Activated naive CD4-positive, alpha-beta T cell treated with anti-CD3 and anti-CD28 coated beads for 36 hours (primary cell): ENCODE measurements at regions of chr6 and their contacts with region 1.

Region 1: DNA sequence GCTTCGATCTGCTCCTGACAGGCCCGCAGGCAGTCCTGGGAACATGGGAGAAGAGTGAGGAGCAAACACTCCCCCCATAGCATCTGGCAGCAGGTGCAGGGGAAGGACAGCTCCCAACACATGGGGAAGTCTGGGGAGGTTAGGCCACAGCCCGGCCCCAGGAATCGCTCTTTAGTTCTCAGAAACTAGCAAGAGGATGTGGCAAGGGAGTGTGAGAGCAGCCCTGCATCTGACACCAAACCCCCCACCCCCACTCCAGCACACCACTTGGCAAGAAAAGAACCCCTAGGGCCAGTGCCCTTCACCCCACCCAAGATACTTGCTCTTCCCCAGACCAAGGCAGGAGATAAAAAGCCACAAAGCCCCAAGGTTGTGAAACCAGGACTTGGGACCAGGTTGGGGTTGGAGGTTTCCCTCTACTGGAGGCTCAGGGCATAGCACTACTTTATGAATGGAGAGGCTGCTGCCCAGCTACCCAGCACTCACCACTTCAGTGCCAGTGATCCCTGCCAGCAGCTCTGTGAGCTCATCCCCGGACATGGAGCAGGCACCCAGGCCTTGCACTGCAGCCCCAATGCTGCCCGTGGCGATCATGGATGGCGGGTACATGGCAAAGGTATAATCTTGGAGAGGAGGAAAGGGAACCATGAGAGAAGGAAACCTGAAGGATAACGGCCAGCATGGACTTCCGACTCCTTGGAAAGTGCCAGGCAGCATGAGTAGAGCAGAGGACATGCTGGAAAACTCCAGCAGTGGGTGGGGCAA is 5.4 kb downstream of the CCND3 start:
- DNase-seq: peak; percentile 80
- H3K4me3 Mint-ChIP-seq: peak overlapping the region; percentile 100
- H3K27ac Mint-ChIP-seq: peak overlapping the region; percentile 99
- H3K4me1 Mint-ChIP-seq: peaks cover 38% of the 10 kb centered on the region
- H3K27me3 Mint-ChIP-seq: no peaks in the 10 kb centered on the region

Region 2: GRCh38 chr6:41813469-41813868 is 122.8 kb before region 1 on chr6:
- CTCF ChIA-PET with region 1: no interaction called
- intact Hi-C with region 1: no loop called
- DNase-seq: no peak
- H3K4me3 Mint-ChIP-seq: no peak overlapping the region
- H3K27ac Mint-ChIP-seq: no peak overlapping the region
- H3K4me1 Mint-ChIP-seq: no peaks in the 10 kb centered on the region
- H3K27me3 Mint-ChIP-seq: no peaks in the 10 kb centered on the region

Region 3: DNA sequence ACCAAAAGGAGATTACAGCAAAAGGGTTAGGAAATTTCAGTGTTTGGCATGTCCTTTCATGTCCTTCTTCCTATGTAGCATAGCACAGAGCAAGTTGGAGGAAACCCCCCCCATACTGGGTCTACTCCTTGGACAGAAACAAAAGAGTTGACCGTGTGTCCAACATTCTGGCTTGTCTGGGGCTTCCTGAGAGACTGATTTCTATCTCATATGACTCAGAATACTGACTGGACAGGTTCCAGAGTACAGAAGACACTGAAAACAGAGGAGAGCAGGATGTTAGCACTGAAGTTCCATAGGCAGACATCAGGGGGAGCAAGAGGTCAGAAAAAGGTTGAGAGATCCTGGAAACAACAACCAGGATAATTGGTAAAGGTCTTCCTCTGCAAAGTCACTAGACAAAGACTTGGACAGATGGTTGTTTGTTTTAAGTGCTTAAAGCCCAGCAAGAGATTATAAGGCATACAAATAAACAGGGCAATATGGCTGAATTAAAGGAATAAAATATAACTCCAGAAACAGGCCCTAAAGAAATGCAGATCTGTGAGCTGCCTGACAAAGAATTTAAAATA is 89.5 kb before region 1 on chr6:
- CTCF ChIA-PET with region 1: interaction called, 8 read pairs
- intact Hi-C with region 1: loop called (anchors 2 kb)
- DNase-seq: peak; percentile 81
- H3K4me3 Mint-ChIP-seq: no peak overlapping the region
- H3K27ac Mint-ChIP-seq: no peak overlapping the region
- H3K4me1 Mint-ChIP-seq: peaks cover 5% of the 10 kb centered on the region
- H3K27me3 Mint-ChIP-seq: no peaks in the 10 kb centered on the region

Region 4: DNA sequence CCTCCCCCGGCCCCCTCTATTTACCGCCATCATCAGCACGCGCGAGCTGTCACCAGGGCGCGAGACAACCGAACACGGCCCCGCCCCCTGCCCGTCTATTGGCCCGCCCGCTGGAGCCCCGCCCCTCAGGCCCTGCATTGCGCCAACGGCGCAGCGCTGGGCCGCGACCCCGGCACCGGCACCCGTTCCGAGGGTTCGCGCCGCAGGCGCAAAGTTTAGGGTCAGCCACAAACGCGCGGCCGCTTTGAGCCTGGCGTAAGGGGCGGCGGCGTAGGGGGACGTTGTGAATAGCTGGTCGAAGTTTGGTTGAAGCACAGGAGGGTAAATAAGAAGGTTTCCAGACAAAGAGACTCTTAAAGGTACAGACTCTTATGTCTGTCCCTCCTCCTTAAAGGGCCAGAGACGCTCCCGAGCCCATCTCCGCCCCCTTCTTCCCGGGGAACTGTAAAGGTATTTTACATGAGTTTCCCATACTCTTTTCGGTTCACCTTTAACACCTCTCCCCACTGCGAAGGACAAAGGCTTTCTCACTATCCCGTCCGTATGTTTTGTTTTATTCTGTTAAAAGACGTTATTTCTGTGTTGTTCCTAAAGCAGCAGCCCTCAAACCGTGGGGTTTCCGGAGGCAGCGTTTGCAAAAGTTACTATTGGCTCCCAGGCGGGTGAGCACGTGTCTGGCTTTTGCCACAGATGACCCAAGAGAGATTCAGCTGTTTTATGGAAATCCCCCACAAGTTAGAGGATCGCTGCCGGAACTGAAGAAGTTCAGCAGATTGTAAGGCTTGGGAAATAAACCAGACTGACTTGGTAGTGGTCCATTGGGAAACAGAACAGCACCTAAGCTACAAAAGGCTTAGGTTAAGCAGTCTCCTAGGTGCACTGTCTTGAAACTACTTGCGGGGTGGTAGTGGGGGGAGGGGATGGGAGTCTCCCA is 40.7 kb before region 1 on chr6 and contains the start of gene USP49:
- CTCF ChIA-PET with region 1: no interaction called
- intact Hi-C with region 1: loop called (anchors 2 kb)
- DNase-seq: peak; percentile 93
- H3K4me3 Mint-ChIP-seq: no peak within 1 kb of the TSS
- H3K27ac Mint-ChIP-seq: peak within 1 kb of the TSS; percentile 91
- H3K4me1 Mint-ChIP-seq: peaks cover 11% of the 10 kb centered on the region
- H3K27me3 Mint-ChIP-seq: no peaks in the 10 kb centered on the region
- total RNA-seq, gene USP49: 8.3 to 8.4 TPM

Region 5: DNA sequence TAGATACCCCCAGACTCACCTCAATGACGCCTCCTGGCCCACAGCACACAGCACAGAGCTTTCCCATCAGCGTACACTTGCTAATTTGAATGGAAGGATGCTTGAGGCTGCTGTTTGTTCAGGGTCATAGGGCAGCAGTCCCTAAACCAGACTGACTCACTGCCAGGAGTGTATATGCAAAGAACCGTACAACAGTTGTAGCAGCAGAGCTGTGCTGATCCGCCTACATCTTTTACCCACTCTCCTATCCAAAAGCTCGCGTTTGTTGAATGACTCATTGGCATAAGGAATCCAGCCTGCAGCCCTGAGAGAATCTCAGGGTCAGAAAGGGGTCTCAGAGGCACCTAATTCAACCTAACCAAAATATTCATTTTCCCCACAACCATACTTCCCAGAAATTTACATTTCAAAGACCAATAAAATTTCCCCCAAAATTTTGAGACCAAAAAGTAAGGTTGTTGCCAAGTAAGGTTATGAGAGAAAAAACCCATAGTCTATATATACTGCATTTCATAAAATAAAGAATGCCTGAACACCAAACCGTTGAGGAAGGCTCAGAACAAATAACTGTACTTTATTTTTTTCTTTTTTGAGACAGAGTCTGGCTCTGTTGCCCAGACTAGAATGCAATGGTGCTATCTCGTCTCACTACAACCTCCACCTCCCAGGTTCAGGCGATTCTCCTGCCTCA is 40.7 kb after region 1 on chr6:
- CTCF ChIA-PET with region 1: interaction called, 6 read pairs
- intact Hi-C with region 1: loop called (anchors 2 kb)
- DNase-seq: peak; percentile 81
- H3K4me3 Mint-ChIP-seq: peak overlapping the region; percentile 78
- H3K27ac Mint-ChIP-seq: peak overlapping the region; percentile 100
- H3K4me1 Mint-ChIP-seq: peaks cover 80% of the 10 kb centered on the region
- H3K27me3 Mint-ChIP-seq: no peaks in the 10 kb centered on the region